CD4-positive, alpha-beta T cell (primary cell): ENCODE measurements at regions of chr3 and their contacts with region 1.

Region 1: GRCh38 chr3:5254281-5255048 is 67.0 kb downstream of the EDEM1 start:
- DNase-seq: no peak
- ATAC-seq: no peak
- H3K4me3 ChIP-seq: no peak overlapping the region
- H3K4me3 Mint-ChIP-seq: no peak overlapping the region
- H3K27ac ChIP-seq: no peak overlapping the region
- H3K27ac Mint-ChIP-seq: no peak overlapping the region
- H3K4me1 ChIP-seq: no peaks in the 10 kb centered on the region
- H3K4me1 Mint-ChIP-seq: no peaks in the 10 kb centered on the region
- H3K27me3 ChIP-seq: no peaks in the 10 kb centered on the region
- H3K27me3 Mint-ChIP-seq: no peaks in the 10 kb centered on the region
- CTCF ChIP-seq: no peak

Region 2: GRCh38 chr3:4943553-4943952 is 310.9 kb before region 1 on chr3:
- CTCF ChIA-PET with region 1: no interaction called
- POLR2A ChIA-PET with region 1: no interaction called
- intact Hi-C with region 1: no loop called
- DNase-seq: peak in 2 of 14 experiments; percentile 11 to 24
- ATAC-seq: no peak
- H3K4me3 ChIP-seq: no peak overlapping the region
- H3K4me3 Mint-ChIP-seq: no peak overlapping the region
- H3K27ac ChIP-seq: no peak overlapping the region
- H3K27ac Mint-ChIP-seq: no peak overlapping the region
- H3K4me1 ChIP-seq: no peaks in the 10 kb centered on the region
- H3K4me1 Mint-ChIP-seq: no peaks in the 10 kb centered on the region
- H3K27me3 ChIP-seq: no peaks in the 10 kb centered on the region
- H3K27me3 Mint-ChIP-seq: no peaks in the 10 kb centered on the region
- CTCF ChIP-seq: peak; percentile 29

Region 3: DNA sequence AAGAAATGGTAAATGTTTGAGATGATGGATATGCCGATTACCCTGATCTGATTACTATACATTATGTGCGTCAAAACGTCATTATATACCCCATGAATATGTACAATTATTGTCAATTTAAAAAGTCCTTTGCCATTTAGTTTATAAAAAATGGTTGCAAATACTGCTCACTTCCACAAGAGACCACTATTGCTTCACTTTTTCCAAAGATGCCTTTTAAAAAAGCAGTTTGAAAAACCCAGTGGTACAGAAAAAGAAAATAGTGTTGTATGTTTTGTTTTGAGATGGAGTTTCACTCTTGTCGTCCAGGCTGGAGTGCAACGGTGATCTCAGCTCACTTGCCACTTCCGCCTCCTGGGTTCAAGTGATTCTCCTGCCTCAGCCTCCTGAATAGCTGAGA is 27.7 kb before region 1 on chr3:
- CTCF ChIA-PET with region 1: no interaction called
- POLR2A ChIA-PET with region 1: no interaction called
- intact Hi-C with region 1: loop called in 1 of 2 experiments (anchors 1 kb)
- DNase-seq: peak in 2 of 14 experiments; percentile 8 to 23
- ATAC-seq: no peak
- H3K4me3 ChIP-seq: no peak overlapping the region
- H3K4me3 Mint-ChIP-seq: no peak overlapping the region
- H3K27ac ChIP-seq: no peak overlapping the region
- H3K27ac Mint-ChIP-seq: no peak overlapping the region
- H3K4me1 ChIP-seq: no peaks in the 10 kb centered on the region
- H3K4me1 Mint-ChIP-seq: no peaks in the 10 kb centered on the region
- H3K27me3 ChIP-seq: no peaks in the 10 kb centered on the region
- H3K27me3 Mint-ChIP-seq: no peaks in the 10 kb centered on the region
- CTCF ChIP-seq: peak; percentile 32

Region 4: DNA sequence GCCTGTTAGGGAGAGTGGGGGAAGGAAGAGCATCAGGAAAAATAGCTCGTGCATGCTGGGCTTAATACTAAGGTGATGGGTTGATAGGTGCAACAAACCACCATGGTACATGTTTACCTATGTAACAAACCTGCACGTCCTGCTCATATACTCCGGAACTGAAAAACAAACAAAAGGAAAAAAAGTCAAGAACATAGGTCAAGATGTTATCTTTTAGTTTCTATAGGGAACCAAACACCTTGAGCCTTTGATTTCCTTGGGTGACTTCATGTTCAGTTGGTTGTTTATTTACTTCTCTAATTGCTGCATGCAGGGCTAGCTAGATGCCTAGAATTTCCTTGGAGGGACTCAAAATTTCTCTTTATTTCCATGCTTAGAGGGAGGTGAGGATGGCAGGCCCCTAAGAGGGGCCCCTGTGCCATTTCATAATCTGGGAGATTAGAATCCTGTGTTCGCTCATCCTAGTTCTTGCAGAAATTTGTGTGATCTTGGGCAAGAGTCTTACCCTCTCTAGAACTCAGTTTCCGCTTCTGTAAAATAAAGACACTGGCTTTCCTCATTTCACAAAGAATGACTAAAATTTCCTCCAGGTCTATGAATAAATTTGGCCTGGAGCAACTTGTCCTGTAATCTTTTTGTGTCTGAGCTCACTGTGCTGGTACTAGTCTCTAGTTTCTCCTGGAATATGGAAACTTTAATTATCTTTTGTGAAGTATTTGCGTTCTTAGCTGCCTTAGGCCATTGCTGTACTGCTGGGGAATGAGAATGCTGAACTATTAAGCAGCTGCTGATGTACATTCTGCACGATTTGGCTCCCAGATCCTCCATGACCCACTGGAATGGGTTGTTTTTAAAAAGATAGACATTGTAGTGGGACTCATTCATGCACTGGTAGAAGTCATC is 390.6 kb after region 1 on chr3:
- CTCF ChIA-PET with region 1: no interaction called
- POLR2A ChIA-PET with region 1: no interaction called
- intact Hi-C with region 1: no loop called
- DNase-seq: no peak
- ATAC-seq: no peak
- H3K4me3 ChIP-seq: no peak overlapping the region
- H3K4me3 Mint-ChIP-seq: no peak overlapping the region
- H3K27ac ChIP-seq: no peak overlapping the region
- H3K27ac Mint-ChIP-seq: no peak overlapping the region
- H3K4me1 ChIP-seq: no peaks in the 10 kb centered on the region
- H3K4me1 Mint-ChIP-seq: no peaks in the 10 kb centered on the region
- H3K27me3 ChIP-seq: no peaks in the 10 kb centered on the region
- H3K27me3 Mint-ChIP-seq: no peaks in the 10 kb centered on the region
- CTCF ChIP-seq: no peak